ENCODE measurements at regions of chr13 and their contacts with region 1.

Region 1: DNA sequence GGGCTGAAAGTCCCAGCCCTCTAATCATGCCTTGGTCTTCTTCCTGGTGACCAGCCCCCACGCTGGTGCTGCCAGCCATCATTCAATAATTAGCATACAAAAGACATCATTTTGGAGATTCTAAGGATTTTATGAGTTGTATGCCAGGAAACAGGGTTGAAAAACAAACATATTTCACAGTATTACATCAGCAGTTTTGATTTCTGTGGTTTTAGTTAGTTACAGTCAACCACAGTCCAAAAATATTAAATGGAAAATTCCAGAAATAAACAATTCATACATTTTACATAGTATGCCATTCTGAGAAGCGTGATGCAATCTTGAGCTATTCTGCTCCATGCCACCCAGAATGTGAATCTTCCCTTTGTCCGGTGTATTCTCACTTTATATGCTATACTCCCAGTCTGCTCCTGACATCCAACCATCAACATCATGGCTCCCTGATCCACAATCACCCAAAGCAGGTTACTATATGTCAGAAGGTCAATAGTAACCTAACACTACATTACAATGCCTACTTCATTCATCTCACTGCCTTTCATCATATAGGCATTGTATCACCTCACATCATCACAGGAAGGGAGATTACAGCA is 49.2 kb downstream of the STOML3 start:
- DNase-seq: no peak
- ATAC-seq: no peak

Region 2: GRCh38 chr13:38671980-38672379 is 269.5 kb before region 1 on chr13:
- intact Hi-C with region 1: loop called (anchors 2 kb)
- DNase-seq: no peak
- ATAC-seq: no peak

Measured in left ventricle myocardium superior (tissue), 1 donor.